Natural killer cell (primary cell): ENCODE measurements at regions of chr14 and their contacts with region 1.

Region 1: GRCh38 chr14:58427281-58428117 is at the starts of genes KIAA0586 and TIMM9:
- DNase-seq: peak; percentile 91 to 99
- ATAC-seq: peak; percentile 90 to 95 (median 91)
- H3K4me3 ChIP-seq: peak within 1 kb of the TSS; percentile 87
- H3K4me3 Mint-ChIP-seq: peak within 1 kb of the TSS; percentile 98
- H3K27ac ChIP-seq: peak within 1 kb of the TSS; percentile 96
- H3K27ac Mint-ChIP-seq: peak within 1 kb of the TSS; percentile 95 to 98
- H3K4me1 ChIP-seq: peaks cover 11% of the 10 kb centered on the region
- H3K4me1 Mint-ChIP-seq: peaks cover 31 to 38% of the 10 kb centered on the region in 2 donors
- H3K27me3 ChIP-seq: no peaks in the 10 kb centered on the region
- H3K27me3 Mint-ChIP-seq: peaks cover 0 to 3% of the 10 kb centered on the region in 2 donors
- CTCF ChIP-seq: no peak
- total RNA-seq, gene KIAA0586: 19.6 to 30.1 (median 28.3) TPM
- total RNA-seq, gene TIMM9: 18.8 to 19.4 (median 19.2) TPM

Region 2: GRCh38 chr14:58107947-58108552 is 319.4 kb before region 1 on chr14:
- intact Hi-C with region 1: no loop called
- DNase-seq: peak in 1 of 2 donors; percentile 70
- ATAC-seq: peak in 2 of 3 donors; percentile 54 to 55
- H3K4me3 ChIP-seq: no peak overlapping the region
- H3K4me3 Mint-ChIP-seq: no peak overlapping the region
- H3K27ac ChIP-seq: no peak overlapping the region
- H3K27ac Mint-ChIP-seq: no peak overlapping the region
- H3K4me1 ChIP-seq: no peaks in the 10 kb centered on the region
- H3K4me1 Mint-ChIP-seq: no peaks in the 10 kb centered on the region
- H3K27me3 ChIP-seq: no peaks in the 10 kb centered on the region
- H3K27me3 Mint-ChIP-seq: peaks cover 10 to 15% of the 10 kb centered on the region in 2 donors
- CTCF ChIP-seq: peak; percentile 62

Region 3: GRCh38 chr14:58199726-58200479 is 227.6 kb before region 1 on chr14 and contains the start of gene ACTR10:
- intact Hi-C with region 1: loop called (anchors 1 kb)
- DNase-seq: peak; percentile 86 to 91
- ATAC-seq: peak; percentile 82 to 94 (median 86)
- H3K4me3 ChIP-seq: peak within 1 kb of the TSS; percentile 96
- H3K4me3 Mint-ChIP-seq: peak within 1 kb of the TSS; percentile 96
- H3K27ac ChIP-seq: peak within 1 kb of the TSS; percentile 96
- H3K27ac Mint-ChIP-seq: peak within 1 kb of the TSS; percentile 94 to 98
- H3K4me1 ChIP-seq: peaks cover 21% of the 10 kb centered on the region
- H3K4me1 Mint-ChIP-seq: peaks cover 31 to 36% of the 10 kb centered on the region in 2 donors
- H3K27me3 ChIP-seq: no peaks in the 10 kb centered on the region
- H3K27me3 Mint-ChIP-seq: no peaks in the 10 kb centered on the region
- CTCF ChIP-seq: no peak
- total RNA-seq, gene ACTR10: 58.0 to 61.0 (median 60.7) TPM

Region 4: DNA sequence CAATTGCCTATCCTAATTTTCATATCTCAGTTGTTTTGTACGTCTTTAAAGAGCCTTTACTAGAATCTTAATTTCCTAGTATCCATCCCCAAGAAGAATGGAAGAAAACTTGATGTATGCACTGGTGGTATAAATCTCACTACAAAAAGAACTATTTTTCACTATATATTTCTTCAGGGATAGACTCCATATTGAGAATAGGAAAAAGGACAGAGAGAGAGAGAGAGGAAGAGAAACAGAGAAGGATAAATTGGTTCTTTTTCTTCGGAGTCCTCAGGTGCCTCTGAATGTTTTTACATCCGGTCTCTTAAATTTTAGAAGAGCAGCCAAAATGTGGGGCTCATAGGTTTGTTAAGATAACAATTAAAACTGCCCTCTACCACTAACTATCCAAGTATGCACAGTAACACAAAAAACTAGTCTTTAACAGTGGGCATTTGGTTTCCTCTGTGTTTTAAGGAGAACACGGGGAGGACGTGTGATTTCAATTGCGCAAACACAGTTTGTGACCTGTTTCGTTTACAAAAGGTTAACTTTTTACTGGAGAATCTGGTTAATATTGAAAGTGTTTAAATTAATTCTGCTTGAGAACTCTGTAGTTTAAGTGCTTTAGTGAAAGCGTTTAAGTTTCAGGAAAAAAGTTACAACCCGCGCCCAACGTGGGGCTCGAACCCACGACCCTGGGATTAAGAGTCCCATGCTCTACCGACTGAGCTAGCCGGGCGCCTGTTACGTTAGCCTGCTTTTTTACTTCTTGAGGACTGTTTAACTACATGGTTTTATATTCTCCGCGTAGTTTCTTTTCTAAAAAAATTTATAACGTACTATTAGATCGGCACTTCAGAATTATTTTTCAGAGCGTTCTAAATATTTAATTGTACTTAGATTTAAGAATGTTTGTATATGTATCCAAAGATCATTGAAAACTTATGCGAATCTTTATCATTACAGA is 188.0 kb before region 1 on chr14:
- intact Hi-C with region 1: loop called (anchors 2 kb)
- DNase-seq: peak; percentile 79 to 91
- ATAC-seq: peak; percentile 30 to 44 (median 40)
- H3K4me3 ChIP-seq: peak overlapping the region; percentile 83
- H3K4me3 Mint-ChIP-seq: no peak overlapping the region
- H3K27ac ChIP-seq: peak overlapping the region; percentile 81
- H3K27ac Mint-ChIP-seq: no peak overlapping the region
- H3K4me1 ChIP-seq: peaks cover 4% of the 10 kb centered on the region
- H3K4me1 Mint-ChIP-seq: peaks cover 7 to 11% of the 10 kb centered on the region in 2 donors
- H3K27me3 ChIP-seq: no peaks in the 10 kb centered on the region
- H3K27me3 Mint-ChIP-seq: no peaks in the 10 kb centered on the region
- CTCF ChIP-seq: no peak

Region 5: DNA sequence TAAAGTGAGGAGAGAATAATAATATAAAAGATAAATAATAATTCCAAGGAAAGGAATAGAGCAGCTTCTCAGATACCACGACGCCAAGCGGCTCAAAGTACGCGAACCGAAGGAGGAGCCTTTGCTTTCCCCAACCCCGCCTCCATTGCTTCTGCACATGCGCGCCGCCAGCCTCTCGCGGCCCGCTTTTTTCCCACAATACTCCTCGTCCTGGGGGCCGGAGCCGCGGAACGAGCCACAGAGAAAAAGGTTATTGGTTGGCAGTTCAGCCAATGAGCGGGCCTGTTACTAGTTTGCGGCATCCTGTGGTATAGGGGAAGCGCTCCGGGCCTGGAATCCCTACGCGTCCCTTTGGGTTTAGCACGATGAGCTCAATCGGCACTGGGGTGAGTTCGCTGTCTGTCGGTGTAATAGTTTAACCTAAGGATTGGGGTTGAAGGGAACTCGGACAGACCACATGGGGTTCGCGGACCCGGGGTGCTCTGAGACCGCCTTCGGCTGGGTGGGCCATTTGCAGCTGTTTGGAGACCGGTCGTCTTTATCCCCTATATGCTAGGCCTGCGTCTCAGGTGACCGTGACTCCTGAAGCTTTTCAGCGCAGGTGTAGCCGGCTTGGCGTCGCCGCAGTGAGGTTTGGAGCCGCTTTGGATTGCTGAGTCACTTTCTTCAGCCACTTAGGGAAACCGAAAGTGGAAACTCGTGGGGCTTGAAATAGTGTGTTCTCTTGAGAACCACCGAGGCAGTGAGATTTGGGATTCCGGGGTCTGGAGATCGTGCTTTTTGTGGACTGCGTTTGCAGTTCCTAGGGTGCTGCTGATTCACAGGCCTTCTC is 182.7 kb before region 1 on chr14 and contains the start of gene PSMA3:
- intact Hi-C with region 1: loop called (anchors 2 kb)
- DNase-seq: peak; percentile 97 to 98
- ATAC-seq: peak; percentile 88 to 97 (median 92)
- H3K4me3 ChIP-seq: peak within 1 kb of the TSS; percentile 88
- H3K4me3 Mint-ChIP-seq: peak within 1 kb of the TSS; percentile 99
- H3K27ac ChIP-seq: peak within 1 kb of the TSS; percentile 94
- H3K27ac Mint-ChIP-seq: peak within 1 kb of the TSS; percentile 95 to 99
- H3K4me1 ChIP-seq: peaks cover 5% of the 10 kb centered on the region
- H3K4me1 Mint-ChIP-seq: peaks cover 29 to 35% of the 10 kb centered on the region in 2 donors
- H3K27me3 ChIP-seq: no peaks in the 10 kb centered on the region
- H3K27me3 Mint-ChIP-seq: no peaks in the 10 kb centered on the region
- CTCF ChIP-seq: no peak
- total RNA-seq, gene PSMA3: 107 to 120 (median 115) TPM

Region 6: GRCh38 chr14:58297762-58298476 is 129.6 kb before region 1 on chr14:
- intact Hi-C with region 1: loop called (anchors 1 kb)
- DNase-seq: peak; percentile 96 to 100
- ATAC-seq: peak; percentile 82 to 95 (median 85)
- H3K4me3 ChIP-seq: peak overlapping the region; percentile 96
- H3K4me3 Mint-ChIP-seq: no peak overlapping the region
- H3K27ac ChIP-seq: peak overlapping the region; percentile 97
- H3K27ac Mint-ChIP-seq: no peak overlapping the region
- H3K4me1 ChIP-seq: peaks cover 11% of the 10 kb centered on the region
- H3K4me1 Mint-ChIP-seq: peaks cover 27 to 40% of the 10 kb centered on the region in 2 donors
- H3K27me3 ChIP-seq: no peaks in the 10 kb centered on the region
- H3K27me3 Mint-ChIP-seq: no peaks in the 10 kb centered on the region
- CTCF ChIP-seq: no peak